ENCODE measurements at regions of chr19 and their contacts with region 1.

Region 1: GRCh38 chr19:42254989-42255765 is at the start of gene ERF:
- DNase-seq: peak; percentile 90 to 98 (median 94)
- ATAC-seq: peak; percentile 90
- H3K4me3 ChIP-seq: peak within 1 kb of the TSS; percentile 96
- H3K4me3 Mint-ChIP-seq: peak within 1 kb of the TSS; percentile 42 to 99 (median 77)
- H3K27ac ChIP-seq: peak within 1 kb of the TSS; percentile 99
- H3K27ac Mint-ChIP-seq: peak within 1 kb of the TSS in 8 of 9 donors; percentile 43 to 92 (median 82)
- H3K4me1 ChIP-seq: peaks cover 20 to 29% of the 10 kb centered on the region in 2 donors
- H3K4me1 Mint-ChIP-seq: peaks cover 20 to 37% (median 30%) of the 10 kb centered on the region in 7 donors
- H3K27me3 ChIP-seq: no peaks in the 10 kb centered on the region
- H3K27me3 Mint-ChIP-seq: peaks cover 0 to 10% (median 0%) of the 10 kb centered on the region in 5 donors
- total RNA-seq, gene ERF: 42.5 to 105 (median 51.8) TPM

Region 2: DNA sequence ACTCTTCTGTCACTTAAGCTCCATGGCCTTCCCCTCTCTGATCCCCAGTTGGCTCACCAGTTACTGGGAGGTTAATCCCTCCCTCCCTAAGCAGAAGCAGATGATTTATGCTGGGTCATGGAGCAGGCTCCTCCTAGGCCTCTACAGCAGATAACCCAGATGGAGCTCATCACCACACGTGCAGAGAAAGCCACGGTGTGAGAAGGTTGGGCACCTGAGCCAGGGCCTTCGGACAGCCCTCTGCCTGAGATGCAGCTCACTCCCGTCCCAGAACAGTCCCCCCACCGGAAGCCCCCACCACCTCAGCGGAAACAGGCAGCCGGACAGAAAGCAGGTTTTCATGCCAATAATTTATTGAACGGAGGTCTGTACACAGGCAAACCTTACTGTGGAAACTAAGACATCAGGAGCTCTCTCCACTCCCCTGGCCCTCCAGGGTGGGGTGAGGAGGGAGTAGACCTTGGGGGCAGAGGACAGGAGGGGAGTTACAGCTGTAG is 25.3 kb before region 1 on chr19:
- CTCF ChIA-PET with region 1: no interaction called
- POLR2A ChIA-PET with region 1: no interaction called
- intact Hi-C with region 1: no loop called
- DNase-seq: no peak
- ATAC-seq: no peak
- H3K4me3 ChIP-seq: no peak overlapping the region
- H3K4me3 Mint-ChIP-seq: no peak overlapping the region
- H3K27ac ChIP-seq: no peak overlapping the region
- H3K27ac Mint-ChIP-seq: peak overlapping the region in 7 of 9 donors; percentile 9 to 72 (median 50)
- H3K4me1 ChIP-seq: no peaks in the 10 kb centered on the region
- H3K4me1 Mint-ChIP-seq: peaks cover 17 to 38% (median 21%) of the 10 kb centered on the region in 7 donors
- H3K27me3 ChIP-seq: no peaks in the 10 kb centered on the region
- H3K27me3 Mint-ChIP-seq: no peaks in the 10 kb centered on the region

Region 3: GRCh38 chr19:42268704-42269477 is 13.7 kb after region 1 on chr19 and contains the start of gene CIC:
- CTCF ChIA-PET with region 1: interaction called, 4 read pairs
- POLR2A ChIA-PET with region 1: interaction called, 10 read pairs
- intact Hi-C with region 1: loop called (anchors 1 kb)
- DNase-seq: peak; percentile 95 to 100 (median 99)
- ATAC-seq: peak; percentile 82
- H3K4me3 ChIP-seq: peak within 1 kb of the TSS; percentile 85
- H3K4me3 Mint-ChIP-seq: peak within 1 kb of the TSS in 1 of 10 donors; percentile 94
- H3K27ac ChIP-seq: peak within 1 kb of the TSS; percentile 96
- H3K27ac Mint-ChIP-seq: peak within 1 kb of the TSS in 4 of 9 donors; percentile 98 to 99 (median 99)
- H3K4me1 ChIP-seq: peaks cover 23 to 29% of the 10 kb centered on the region in 2 donors
- H3K4me1 Mint-ChIP-seq: peaks cover 8 to 31% (median 25%) of the 10 kb centered on the region in 7 donors
- H3K27me3 ChIP-seq: no peaks in the 10 kb centered on the region
- H3K27me3 Mint-ChIP-seq: no peaks in the 10 kb centered on the region
- total RNA-seq, gene CIC: 90.4 to 134 (median 102) TPM

Region 4: GRCh38 chr19:42295831-42296525 is 40.8 kb after region 1 on chr19:
- CTCF ChIA-PET with region 1: interaction called, 4 read pairs
- POLR2A ChIA-PET with region 1: no interaction called
- intact Hi-C with region 1: loop called in 1 of 2 experiments (anchors 1 kb)
- DNase-seq: peak; percentile 76 to 94 (median 85)
- ATAC-seq: peak; percentile 96
- H3K4me3 ChIP-seq: no peak overlapping the region
- H3K4me3 Mint-ChIP-seq: no peak overlapping the region
- H3K27ac ChIP-seq: no peak overlapping the region
- H3K27ac Mint-ChIP-seq: peak overlapping the region in 6 of 9 donors; percentile 11 to 70 (median 42)
- H3K4me1 ChIP-seq: peaks cover 0 to 8% of the 10 kb centered on the region in 2 donors
- H3K4me1 Mint-ChIP-seq: peaks cover 8 to 18% (median 12%) of the 10 kb centered on the region in 7 donors
- H3K27me3 ChIP-seq: no peaks in the 10 kb centered on the region
- H3K27me3 Mint-ChIP-seq: no peaks in the 10 kb centered on the region

Measured in naive thymus-derived CD4-positive, alpha-beta T cell (primary cell).